ENCODE measurements at regions of chr6 and their contacts with region 1.

Region 1: GRCh38 chr6:5379647-5380242 is 118.4 kb downstream of the FARS2 start:
- H3K4me3 Mint-ChIP-seq: no peak overlapping the region
- H3K27ac Mint-ChIP-seq: no peak overlapping the region
- H3K4me1 Mint-ChIP-seq: no peaks in the 10 kb centered on the region
- H3K27me3 Mint-ChIP-seq: no peaks in the 10 kb centered on the region

Region 2: GRCh38 chr6:5053038-5053437 is 326.7 kb before region 1 on chr6:
- intact Hi-C with region 1: loop called (anchors 10 kb)
- H3K4me3 Mint-ChIP-seq: no peak overlapping the region
- H3K27ac Mint-ChIP-seq: peak overlapping the region; percentile 10
- H3K4me1 Mint-ChIP-seq: peaks cover 6% of the 10 kb centered on the region
- H3K27me3 Mint-ChIP-seq: no peaks in the 10 kb centered on the region

Region 3: GRCh38 chr6:5143634-5144311 is 236.0 kb before region 1 on chr6:
- intact Hi-C with region 1: loop called (anchors 1 kb)
- H3K4me3 Mint-ChIP-seq: no peak overlapping the region
- H3K27ac Mint-ChIP-seq: no peak overlapping the region
- H3K4me1 Mint-ChIP-seq: peaks cover 6% of the 10 kb centered on the region
- H3K27me3 Mint-ChIP-seq: no peaks in the 10 kb centered on the region

Region 4: GRCh38 chr6:5214570-5215052 is 165.1 kb before region 1 on chr6:
- intact Hi-C with region 1: loop called (anchors 5 kb)
- H3K4me3 Mint-ChIP-seq: no peak overlapping the region
- H3K27ac Mint-ChIP-seq: no peak overlapping the region
- H3K4me1 Mint-ChIP-seq: peaks cover 8% of the 10 kb centered on the region
- H3K27me3 Mint-ChIP-seq: no peaks in the 10 kb centered on the region

Region 5: DNA sequence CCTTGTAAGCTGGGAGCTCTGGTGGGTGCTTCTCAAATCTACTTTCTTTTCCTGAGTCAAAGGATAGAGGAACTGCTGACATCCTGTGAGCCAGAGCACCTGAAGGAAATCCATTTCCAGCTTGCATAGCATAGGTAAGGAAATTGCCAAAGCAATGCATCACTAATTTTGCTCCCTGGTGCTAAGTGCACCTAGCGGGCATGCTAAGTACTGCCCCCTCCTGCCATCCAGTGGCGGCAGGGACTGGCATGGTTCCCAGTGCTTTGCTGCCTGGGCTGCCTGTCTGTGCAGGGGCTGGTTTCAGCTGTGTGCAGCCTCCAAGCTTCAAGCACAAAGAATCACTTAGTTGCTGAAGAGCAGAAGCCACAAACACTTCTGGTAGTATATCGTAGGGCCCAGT is 54.6 kb before region 1 on chr6:
- intact Hi-C with region 1: no loop called
- H3K4me3 Mint-ChIP-seq: no peak overlapping the region
- H3K27ac Mint-ChIP-seq: no peak overlapping the region
- H3K4me1 Mint-ChIP-seq: peaks cover 8% of the 10 kb centered on the region
- H3K27me3 Mint-ChIP-seq: no peaks in the 10 kb centered on the region

Region 6: DNA sequence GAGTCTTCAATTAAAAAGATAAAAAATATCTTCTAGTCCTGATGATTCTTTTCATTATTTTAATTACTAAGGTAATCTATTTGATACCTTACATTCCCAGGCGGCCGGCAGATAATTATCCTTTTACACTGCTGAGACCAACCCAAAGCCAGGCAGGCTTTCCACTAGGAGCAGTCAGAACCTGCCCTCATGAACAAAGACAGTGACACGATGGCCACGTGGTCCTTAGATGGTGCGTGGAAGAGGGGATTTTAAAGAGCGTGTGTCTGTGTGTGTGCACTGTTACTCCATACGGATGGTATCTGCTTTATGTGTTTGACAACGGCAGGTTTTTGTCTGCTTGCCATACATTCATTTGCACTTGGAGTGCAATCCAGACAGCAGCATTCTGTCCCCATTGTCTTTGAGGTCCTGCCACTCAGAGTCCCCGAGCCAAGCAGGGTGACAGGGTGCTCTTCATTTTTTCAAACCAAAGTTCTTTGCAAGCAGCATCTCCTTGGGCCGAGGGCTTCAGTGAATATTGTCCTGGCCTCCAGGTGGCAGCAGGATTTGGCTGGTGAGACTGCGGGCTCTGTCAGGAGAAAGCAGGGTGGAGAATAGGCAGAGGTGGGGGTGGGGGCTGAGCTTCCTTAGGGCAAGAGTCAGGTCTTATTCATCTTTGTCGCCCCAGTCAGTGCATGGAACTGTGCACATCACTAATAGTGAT is 366.5 kb after region 1 on chr6:
- intact Hi-C with region 1: no loop called
- H3K4me3 Mint-ChIP-seq: no peak overlapping the region
- H3K27ac Mint-ChIP-seq: no peak overlapping the region
- H3K4me1 Mint-ChIP-seq: peaks cover 22% of the 10 kb centered on the region
- H3K27me3 Mint-ChIP-seq: no peaks in the 10 kb centered on the region